Posterior vena cava (tissue), 2 donors: ENCODE measurements at regions of chr4 and their contacts with region 1.

Region 1: GRCh38 chr4:173318648-173319211 is 15.4 kb downstream of the HMGB2 start:
- DNase-seq: no peak

Region 2: DNA sequence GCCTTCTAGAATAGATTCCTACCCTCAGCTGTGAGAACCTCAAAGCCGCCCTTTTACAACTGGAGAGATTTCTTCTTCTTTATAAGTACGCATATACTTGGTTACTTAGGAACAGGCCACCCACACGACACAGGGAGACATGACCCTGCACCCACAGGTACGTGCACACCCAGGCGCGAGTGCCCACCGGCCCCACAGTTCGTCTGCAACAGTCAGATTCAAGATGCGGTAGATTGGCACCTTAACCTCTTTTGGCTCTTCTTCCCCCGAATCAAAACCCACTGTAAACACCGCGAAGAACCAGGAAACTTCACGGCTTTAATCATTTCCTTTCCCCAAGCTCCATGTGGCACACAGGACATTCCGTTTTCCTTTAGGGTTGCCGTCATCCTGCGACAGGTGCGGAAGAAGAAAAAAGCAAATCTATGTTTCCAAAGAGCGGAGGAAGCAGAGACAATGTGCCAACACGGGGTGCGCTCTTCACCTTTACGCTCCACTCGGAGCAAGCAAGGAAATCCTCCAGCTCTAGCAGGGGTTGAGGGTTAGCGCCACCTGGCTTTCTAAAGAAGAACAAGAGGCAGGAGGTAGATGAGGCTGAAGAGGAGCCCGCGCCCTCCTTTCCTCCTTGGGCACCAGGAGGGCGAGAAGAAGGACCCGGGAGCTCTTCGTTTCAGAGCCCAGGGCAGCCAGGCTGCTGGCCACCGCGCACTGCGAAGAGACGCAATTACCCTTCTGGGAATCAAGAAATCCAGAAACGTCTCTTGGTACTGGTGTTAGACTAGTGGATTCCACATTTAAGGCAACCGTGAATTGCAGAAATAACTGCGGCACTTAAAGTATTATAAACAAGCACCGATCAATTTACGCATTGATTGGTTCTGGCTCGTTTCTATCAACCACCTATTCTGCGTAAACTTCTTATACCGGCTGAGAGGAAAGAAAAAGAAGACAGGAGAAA is 175.6 kb after region 1 on chr4:
- intact Hi-C with region 1: loop called (anchors 5 to 10 kb)
- DNase-seq: no peak